Left ventricle myocardium superior (tissue), 1 donor: ENCODE measurements at regions of chr2 and their contacts with region 1.

Region 1: GRCh38 chr2:97806738-97807618 is 93.6 kb downstream of the ZAP70 start:
- DNase-seq: peak; percentile 89
- ATAC-seq: peak; percentile 98

Region 2: GRCh38 chr2:98188351-98189049 is 381.5 kb after region 1 on chr2:
- intact Hi-C with region 1: loop called (anchors 10 kb)
- DNase-seq: no peak
- ATAC-seq: peak; percentile 63

Region 3: GRCh38 chr2:98201576-98201975 is 394.6 kb after region 1 on chr2:
- intact Hi-C with region 1: no loop called
- DNase-seq: no peak
- ATAC-seq: no peak

Region 4: DNA sequence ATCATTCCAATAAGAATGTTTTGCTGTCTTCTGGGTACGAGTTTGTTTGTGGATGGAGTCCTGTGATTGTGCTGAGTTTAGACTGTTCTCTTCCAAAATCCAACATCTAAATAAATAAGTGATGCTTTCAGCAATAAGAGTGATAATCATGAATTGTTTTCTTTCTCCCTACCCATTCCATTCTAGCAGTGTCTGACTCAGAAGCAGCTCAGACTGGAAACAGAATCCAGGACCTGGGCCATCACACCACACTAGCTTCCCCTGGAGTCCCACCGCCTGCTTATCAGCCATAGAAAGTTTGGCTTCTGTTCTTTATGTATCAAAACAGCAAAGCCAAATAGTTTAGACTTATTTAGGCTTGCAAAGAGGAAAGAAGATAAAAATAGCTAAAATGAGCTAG is 462.9 kb after region 1 on chr2:
- intact Hi-C with region 1: loop called (anchors 10 kb)
- DNase-seq: no peak
- ATAC-seq: no peak